ENCODE measurements at regions of chr15 and their contacts with region 1.

Region 1: GRCh38 chr15:25438601-25439368 is at the start of gene UBE3A:
- DNase-seq: peak; percentile 95
- ATAC-seq: peak; percentile 99
- total RNA-seq, gene UBE3A: 104 TPM

Region 2: DNA sequence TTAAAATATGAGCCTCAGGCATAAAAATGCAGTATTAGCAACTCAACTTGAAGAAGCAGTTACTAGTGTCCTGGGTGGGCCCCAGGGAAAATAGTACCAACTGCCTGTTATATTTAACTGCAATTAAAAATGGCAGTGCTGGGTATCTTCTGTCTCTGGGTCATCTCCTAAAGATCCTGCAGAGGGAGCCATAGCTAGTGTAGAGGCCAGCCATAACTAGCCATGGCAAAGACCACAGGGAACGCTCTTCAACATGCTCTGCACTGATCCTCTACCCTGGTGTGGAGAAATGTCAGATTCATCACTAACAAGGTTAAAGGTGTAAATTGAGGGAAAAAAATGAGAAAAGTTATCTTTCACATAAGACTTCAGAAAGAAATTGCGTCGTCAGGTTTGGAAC is 302.7 kb before region 1 on chr15:
- intact Hi-C with region 1: loop called (anchors 5 kb)
- DNase-seq: no peak
- ATAC-seq: peak; percentile 47

Region 3: GRCh38 chr15:25345943-25346342 is 92.8 kb before region 1 on chr15:
- intact Hi-C with region 1: loop called (anchors 5 kb)
- DNase-seq: peak; percentile 77
- ATAC-seq: peak; percentile 96

Region 4: GRCh38 chr15:26082221-26083109 is 643.7 kb after region 1 on chr15:
- intact Hi-C with region 1: loop called (anchors 10 kb)
- DNase-seq: peak; percentile 97
- ATAC-seq: peak; percentile 98